Caco-2 (cell line): ENCODE measurements at regions of chr4 and their contacts with region 1.

Region 1: DNA sequence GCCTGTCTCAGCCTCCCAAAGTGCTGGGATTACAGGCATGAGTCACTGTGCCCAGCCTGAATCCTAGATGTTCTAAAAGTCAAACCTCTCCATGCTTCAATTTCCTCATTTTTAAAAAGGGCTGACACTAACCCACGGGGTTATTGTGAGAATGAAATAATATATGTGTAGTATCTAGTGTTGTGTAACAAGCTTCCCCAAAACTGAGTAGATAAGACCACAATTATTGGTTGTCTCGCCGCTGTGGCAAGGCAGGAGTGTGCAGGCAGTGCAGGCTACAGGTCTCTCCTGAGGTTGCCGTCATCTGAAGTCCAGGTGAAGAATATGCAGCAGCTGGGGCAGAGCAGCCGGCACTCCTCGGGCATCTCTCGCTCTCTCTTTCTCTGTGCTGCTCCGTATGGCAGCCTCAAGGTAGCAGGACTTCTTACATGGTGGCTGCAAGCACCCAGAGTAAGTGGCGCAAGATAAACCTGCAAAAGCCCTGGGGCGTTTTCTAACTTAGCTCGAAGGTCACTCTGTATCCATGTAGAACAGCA is 30.9 kb downstream of the RAB33B start:
- DNase-seq: peak; percentile 67 to 77
- H3K4me3 ChIP-seq: peak overlapping the region; percentile 29
- H3K4me3 Mint-ChIP-seq: peak overlapping the region; percentile 81
- H3K27ac Mint-ChIP-seq: peak overlapping the region; percentile 42
- H3K4me1 ChIP-seq: no peaks in the 10 kb centered on the region
- H3K4me1 Mint-ChIP-seq: peaks cover 11% of the 10 kb centered on the region
- H3K27me3 ChIP-seq: no peaks in the 10 kb centered on the region
- H3K27me3 Mint-ChIP-seq: no peaks in the 10 kb centered on the region
- CTCF ChIP-seq: no peak

Region 2: GRCh38 chr4:139458999-139459398 is 25.9 kb before region 1 on chr4:
- CTCF ChIA-PET with region 1: no interaction called
- POLR2A ChIA-PET with region 1: no interaction called
- intact Hi-C with region 1: loop called (anchors 2 kb)
- DNase-seq: peak; percentile 45 to 52
- H3K4me3 ChIP-seq: no peak overlapping the region
- H3K4me3 Mint-ChIP-seq: peak overlapping the region; percentile 37
- H3K27ac Mint-ChIP-seq: peak overlapping the region; percentile 52
- H3K4me1 ChIP-seq: peaks cover 51% of the 10 kb centered on the region
- H3K4me1 Mint-ChIP-seq: peaks cover 51% of the 10 kb centered on the region
- H3K27me3 ChIP-seq: no peaks in the 10 kb centered on the region
- H3K27me3 Mint-ChIP-seq: no peaks in the 10 kb centered on the region
- CTCF ChIP-seq: no peak

Region 3: GRCh38 chr4:139530833-139531427 is 46.1 kb after region 1 on chr4:
- CTCF ChIA-PET with region 1: no interaction called
- POLR2A ChIA-PET with region 1: no interaction called
- intact Hi-C with region 1: no loop called
- DNase-seq: peak; percentile 49 to 71
- H3K4me3 ChIP-seq: no peak overlapping the region
- H3K4me3 Mint-ChIP-seq: no peak overlapping the region
- H3K27ac Mint-ChIP-seq: no peak overlapping the region
- H3K4me1 ChIP-seq: no peaks in the 10 kb centered on the region
- H3K4me1 Mint-ChIP-seq: no peaks in the 10 kb centered on the region
- H3K27me3 ChIP-seq: no peaks in the 10 kb centered on the region
- H3K27me3 Mint-ChIP-seq: no peaks in the 10 kb centered on the region
- CTCF ChIP-seq: peak; percentile 62 to 70

Region 4: DNA sequence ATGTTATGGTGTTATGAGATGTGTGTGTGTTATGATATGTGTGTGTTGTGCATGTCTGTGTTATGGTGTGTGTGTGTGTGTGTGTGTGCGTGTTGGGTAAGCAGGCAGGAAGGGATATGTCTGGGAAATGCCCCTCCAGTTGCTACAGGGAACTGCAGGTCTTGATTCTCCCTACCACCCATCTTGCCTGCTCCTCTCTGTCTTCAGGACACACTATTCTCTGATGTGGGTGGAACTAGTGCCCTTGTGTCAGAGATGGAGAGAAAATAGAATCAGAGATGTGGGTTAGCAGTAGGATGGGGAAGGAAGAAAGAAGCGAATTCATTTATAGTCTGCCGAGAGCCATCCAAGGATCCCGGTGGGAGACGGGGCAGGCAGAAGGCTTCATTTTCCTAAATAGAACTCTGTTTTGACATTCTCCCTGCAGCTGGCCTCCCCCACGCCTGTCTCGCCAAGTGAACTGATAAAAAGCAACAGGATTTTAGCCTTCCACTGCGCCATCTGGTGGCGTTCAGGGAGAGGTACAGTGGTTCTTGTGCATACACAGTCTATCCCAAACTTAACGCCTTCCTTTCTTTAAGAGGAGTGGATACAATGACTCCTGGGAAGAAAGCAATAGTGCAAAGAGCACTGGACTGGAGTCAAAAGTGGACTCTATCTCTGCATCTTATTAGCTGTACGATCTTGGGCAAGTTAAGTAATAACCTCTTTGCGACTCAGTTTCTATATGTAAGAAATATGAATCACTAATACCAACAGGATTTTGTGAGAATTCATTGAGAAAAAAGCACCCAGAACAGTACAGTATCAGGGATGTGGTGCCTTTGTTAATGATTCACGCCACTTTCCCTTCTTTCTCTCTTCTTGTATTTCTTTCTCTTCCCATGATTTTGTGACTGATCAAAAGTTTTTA is 166.7 kb after region 1 on chr4:
- CTCF ChIA-PET with region 1: no interaction called
- POLR2A ChIA-PET with region 1: no interaction called
- intact Hi-C with region 1: no loop called
- DNase-seq: peak; percentile 66 to 75
- H3K4me3 ChIP-seq: no peak overlapping the region
- H3K4me3 Mint-ChIP-seq: no peak overlapping the region
- H3K27ac Mint-ChIP-seq: no peak overlapping the region
- H3K4me1 ChIP-seq: peaks cover 2% of the 10 kb centered on the region; the same call in 1 of the 2 replicates
- H3K4me1 Mint-ChIP-seq: peaks cover 12% of the 10 kb centered on the region
- H3K27me3 ChIP-seq: no peaks in the 10 kb centered on the region
- H3K27me3 Mint-ChIP-seq: no peaks in the 10 kb centered on the region
- CTCF ChIP-seq: peak; percentile 86 to 90